CD8-positive, alpha-beta T cell (primary cell): ENCODE measurements at regions of chr2 and their contacts with region 1.

Region 1: DNA sequence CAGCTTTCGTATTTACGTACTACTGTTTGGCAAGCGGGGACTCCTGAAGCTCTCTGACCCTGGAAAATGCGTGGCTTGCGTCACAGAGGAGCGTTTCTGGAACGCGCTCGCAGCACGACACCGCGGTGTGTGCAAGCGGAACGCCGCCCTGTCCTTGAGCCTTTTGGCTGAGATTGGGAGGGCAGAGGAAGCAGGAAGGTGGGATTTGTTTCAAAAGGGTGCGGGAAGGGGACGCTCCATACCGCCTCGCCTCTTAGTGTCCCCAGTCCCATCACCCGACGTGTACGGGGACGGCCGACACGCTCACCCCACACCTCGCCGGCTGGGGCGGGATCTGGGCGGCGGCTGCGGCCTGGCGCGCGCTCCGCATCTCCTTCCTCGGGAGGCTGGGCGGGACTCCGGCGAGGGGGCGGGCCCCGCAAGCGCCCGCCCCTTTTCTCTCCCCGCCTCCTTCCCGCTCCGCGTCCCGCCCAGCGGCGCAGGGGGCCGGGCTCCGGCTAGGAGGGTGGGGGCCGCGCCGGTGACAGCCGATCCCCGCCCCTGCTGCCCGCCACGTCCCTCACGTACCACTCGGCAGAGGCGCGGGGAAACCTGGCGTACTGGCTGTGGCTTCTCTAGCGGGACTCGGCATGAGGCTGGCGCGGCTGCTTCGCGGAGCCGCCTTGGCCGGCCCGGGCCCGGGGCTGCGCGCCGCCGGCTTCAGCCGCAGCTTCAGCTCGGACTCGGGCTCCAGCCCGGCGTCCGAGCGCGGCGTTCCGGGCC is at the start of gene PDK1:
- DNase-seq: peak; percentile 81 to 95 (median 90)
- ATAC-seq: peak; percentile 92
- H3K4me3 ChIP-seq: peak within 1 kb of the TSS; percentile 77 to 98
- H3K4me3 Mint-ChIP-seq: peak within 1 kb of the TSS; percentile 94
- H3K27ac ChIP-seq: peak within 1 kb of the TSS; percentile 66 to 82
- H3K27ac Mint-ChIP-seq: peak within 1 kb of the TSS; percentile 86
- H3K4me1 ChIP-seq: peaks cover 33% of the 10 kb centered on the region
- H3K4me1 Mint-ChIP-seq: peaks cover 49% of the 10 kb centered on the region
- H3K27me3 ChIP-seq: no peaks in the 10 kb centered on the region
- H3K27me3 Mint-ChIP-seq: no peaks in the 10 kb centered on the region
- CTCF ChIP-seq: no peak
- total RNA-seq, gene PDK1: 34.1 to 36.6 TPM

Region 2: GRCh38 chr2:171433763-171434670 is 1121.7 kb before region 1 on chr2 and contains the starts of genes DCAF17 and METTL8:
- CTCF ChIA-PET with region 1: no interaction called
- POLR2A ChIA-PET with region 1: no interaction called
- intact Hi-C with region 1: loop called (anchors 5 to 10 kb)
- DNase-seq: peak; percentile 84 to 97 (median 93)
- ATAC-seq: peak; percentile 91
- H3K4me3 ChIP-seq: peak within 1 kb of the TSS; percentile 79 to 93
- H3K4me3 Mint-ChIP-seq: peak within 1 kb of the TSS; percentile 91
- H3K27ac ChIP-seq: peak within 1 kb of the TSS; percentile 80 to 97
- H3K27ac Mint-ChIP-seq: peak within 1 kb of the TSS; percentile 96
- H3K4me1 ChIP-seq: peaks cover 12% of the 10 kb centered on the region
- H3K4me1 Mint-ChIP-seq: peaks cover 47% of the 10 kb centered on the region
- H3K27me3 ChIP-seq: no peaks in the 10 kb centered on the region
- H3K27me3 Mint-ChIP-seq: no peaks in the 10 kb centered on the region
- CTCF ChIP-seq: peak; percentile 12
- total RNA-seq, gene DCAF17: 12.5 to 12.9 TPM
- total RNA-seq, gene METTL8: 6.2 to 7.7 TPM

Region 3: DNA sequence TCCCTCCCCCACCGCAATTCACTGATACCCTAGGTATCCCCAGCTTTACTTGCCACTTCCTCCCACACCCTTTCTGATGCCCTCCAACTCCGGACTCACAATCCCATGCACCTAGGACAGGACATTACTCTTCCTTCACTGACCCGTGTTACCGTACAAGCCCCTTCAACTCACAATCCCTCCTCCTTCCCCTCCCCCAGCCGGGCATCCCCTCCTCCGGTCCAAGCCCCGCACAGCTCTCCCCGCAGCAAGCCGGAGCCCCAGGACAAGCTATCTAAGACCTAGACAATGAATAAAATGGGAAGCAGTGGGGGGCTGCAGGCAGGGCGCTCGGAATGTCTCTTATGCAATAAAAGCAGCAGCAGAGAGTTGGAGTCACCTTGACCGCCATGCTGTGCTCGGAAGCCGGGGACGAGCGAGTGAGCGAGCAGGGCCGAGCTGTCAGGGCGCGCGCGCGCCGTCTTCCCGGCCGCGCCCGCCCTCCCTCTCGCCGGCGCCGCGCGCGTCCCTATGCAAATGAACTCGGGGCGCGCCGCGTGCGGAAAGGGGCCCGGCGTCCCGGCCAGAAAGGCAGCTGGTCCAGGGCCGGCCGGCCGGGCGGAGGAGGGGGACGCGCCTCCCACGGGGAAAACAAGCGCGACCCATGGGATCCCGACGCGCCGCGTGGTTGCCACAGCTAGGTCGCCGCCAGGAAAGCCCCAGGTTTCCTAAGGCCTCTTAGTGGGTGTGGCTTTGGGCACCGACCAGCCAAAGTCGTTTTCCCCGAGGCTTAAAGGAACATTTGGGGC is 661.7 kb before region 1 on chr2 and contains the start of gene SLC25A12:
- CTCF ChIA-PET with region 1: no interaction called
- POLR2A ChIA-PET with region 1: no interaction called
- intact Hi-C with region 1: loop called (anchors 1 to 10 kb)
- DNase-seq: peak; percentile 38 to 87 (median 72)
- ATAC-seq: peak; percentile 93
- H3K4me3 ChIP-seq: peak within 1 kb of the TSS; percentile 76 to 97
- H3K4me3 Mint-ChIP-seq: peak within 1 kb of the TSS; percentile 99
- H3K27ac ChIP-seq: peak within 1 kb of the TSS; percentile 51 to 71
- H3K27ac Mint-ChIP-seq: peak within 1 kb of the TSS; percentile 88
- H3K4me1 ChIP-seq: peaks cover 25% of the 10 kb centered on the region
- H3K4me1 Mint-ChIP-seq: peaks cover 47% of the 10 kb centered on the region
- H3K27me3 ChIP-seq: no peaks in the 10 kb centered on the region
- H3K27me3 Mint-ChIP-seq: no peaks in the 10 kb centered on the region
- CTCF ChIP-seq: no peak
- total RNA-seq, gene SLC25A12: 9.1 to 9.2 TPM

Region 4: GRCh38 chr2:171999604-172000469 is 555.9 kb before region 1 on chr2 and contains the start of gene METAP1D:
- CTCF ChIA-PET with region 1: no interaction called
- POLR2A ChIA-PET with region 1: no interaction called
- intact Hi-C with region 1: loop called in 1 of 2 experiments (anchors 5 kb)
- DNase-seq: peak; percentile 61 to 91 (median 81)
- ATAC-seq: peak; percentile 87
- H3K4me3 ChIP-seq: peak within 1 kb of the TSS; percentile 85 to 87
- H3K4me3 Mint-ChIP-seq: peak within 1 kb of the TSS; percentile 84
- H3K27ac ChIP-seq: peak within 1 kb of the TSS; percentile 57 to 69
- H3K27ac Mint-ChIP-seq: peak within 1 kb of the TSS; percentile 82
- H3K4me1 ChIP-seq: peaks cover 8% of the 10 kb centered on the region
- H3K4me1 Mint-ChIP-seq: peaks cover 23% of the 10 kb centered on the region
- H3K27me3 ChIP-seq: peaks cover 0 to 4% of the 10 kb centered on the region in 2 experiments
- H3K27me3 Mint-ChIP-seq: peaks cover 8% of the 10 kb centered on the region
- CTCF ChIP-seq: no peak
- total RNA-seq, gene METAP1D: 5.7 to 6.2 TPM

Region 5: DNA sequence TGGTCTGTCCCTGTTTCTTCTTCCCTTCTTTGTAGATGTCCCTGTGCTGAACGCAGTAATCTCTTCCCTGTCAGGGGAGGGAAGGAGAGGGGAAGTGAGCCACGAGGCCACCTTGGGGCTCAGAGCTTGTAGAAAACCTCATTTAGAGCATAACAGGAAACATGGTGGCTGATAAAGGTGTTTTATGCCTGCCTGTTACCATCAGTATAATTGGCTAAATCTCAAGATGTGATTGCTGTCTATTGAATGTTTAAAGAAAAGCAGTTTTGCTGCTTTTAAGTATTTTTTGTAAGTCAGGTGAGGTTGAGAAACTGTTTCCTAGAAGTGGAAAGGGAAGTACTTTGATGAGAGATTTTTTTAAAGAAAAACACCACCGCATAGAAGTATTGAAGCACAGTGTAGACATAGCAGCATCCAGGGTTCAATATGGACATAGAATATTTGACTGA is 59.5 kb before region 1 on chr2:
- CTCF ChIA-PET with region 1: interaction called, 7 read pairs
- POLR2A ChIA-PET with region 1: interaction called, 7 read pairs
- intact Hi-C with region 1: loop called (anchors 2 kb)
- DNase-seq: peak in 7 of 9 experiments; percentile 30 to 78 (median 57)
- ATAC-seq: peak; percentile 94
- H3K4me3 ChIP-seq: peak overlapping the region in 1 of 2 experiments; percentile 4
- H3K4me3 Mint-ChIP-seq: peak overlapping the region; percentile 61
- H3K27ac ChIP-seq: peak overlapping the region; percentile 40 to 61
- H3K27ac Mint-ChIP-seq: peak overlapping the region; percentile 96
- H3K4me1 ChIP-seq: peaks cover 83% of the 10 kb centered on the region
- H3K4me1 Mint-ChIP-seq: peaks cover 75% of the 10 kb centered on the region
- H3K27me3 ChIP-seq: no peaks in the 10 kb centered on the region
- H3K27me3 Mint-ChIP-seq: no peaks in the 10 kb centered on the region
- CTCF ChIP-seq: no peak

Region 6: DNA sequence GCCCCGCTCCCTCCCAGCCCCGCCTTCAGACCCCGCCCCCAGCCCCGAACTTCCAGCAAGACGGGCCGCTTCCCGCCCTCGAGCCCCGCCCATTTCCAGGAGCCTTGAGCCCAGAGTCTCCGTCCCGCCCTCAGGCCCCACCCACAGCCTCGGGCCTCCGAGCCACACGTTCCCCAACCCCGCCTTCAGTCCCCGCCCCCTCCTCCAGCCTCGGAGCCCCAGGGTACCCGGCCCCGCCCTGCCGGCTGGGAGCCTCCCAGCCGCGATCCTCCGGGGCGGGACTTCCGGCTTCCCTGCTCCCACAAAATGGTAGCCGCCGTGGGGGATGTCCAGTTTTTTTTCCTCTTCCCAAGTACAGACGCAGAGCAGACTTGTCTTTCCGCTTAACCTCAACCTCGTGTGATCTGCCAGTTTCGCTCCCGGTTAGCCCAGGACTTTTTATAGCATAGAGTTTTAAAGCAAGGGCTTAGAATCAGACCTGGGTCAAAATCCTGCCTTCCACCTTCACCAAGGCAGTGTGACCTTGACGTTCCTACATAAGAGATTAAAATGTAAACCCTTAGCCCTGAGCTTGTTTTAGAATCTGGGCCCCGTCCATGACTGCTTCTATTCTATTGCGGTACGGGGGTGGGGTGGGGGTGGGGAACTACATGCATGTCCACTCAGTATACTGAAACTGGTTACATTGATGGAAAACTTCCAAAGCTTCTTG is 1931.6 kb after region 1 on chr2:
- CTCF ChIA-PET with region 1: no interaction called
- POLR2A ChIA-PET with region 1: no interaction called
- intact Hi-C with region 1: loop called in 1 of 2 experiments (anchors 10 kb)
- DNase-seq: peak; percentile 77 to 98 (median 97)
- ATAC-seq: peak; percentile 74
- H3K4me3 ChIP-seq: peak overlapping the region; percentile 83 to 86
- H3K4me3 Mint-ChIP-seq: peak overlapping the region; percentile 97
- H3K27ac ChIP-seq: peak overlapping the region; percentile 69 to 85
- H3K27ac Mint-ChIP-seq: peak overlapping the region; percentile 88
- H3K4me1 ChIP-seq: peaks cover 59% of the 10 kb centered on the region
- H3K4me1 Mint-ChIP-seq: peaks cover 73% of the 10 kb centered on the region
- H3K27me3 ChIP-seq: no peaks in the 10 kb centered on the region
- H3K27me3 Mint-ChIP-seq: no peaks in the 10 kb centered on the region
- CTCF ChIP-seq: no peak